ENCODE measurements at regions of chr10 and their contacts with region 1.

Region 1: DNA sequence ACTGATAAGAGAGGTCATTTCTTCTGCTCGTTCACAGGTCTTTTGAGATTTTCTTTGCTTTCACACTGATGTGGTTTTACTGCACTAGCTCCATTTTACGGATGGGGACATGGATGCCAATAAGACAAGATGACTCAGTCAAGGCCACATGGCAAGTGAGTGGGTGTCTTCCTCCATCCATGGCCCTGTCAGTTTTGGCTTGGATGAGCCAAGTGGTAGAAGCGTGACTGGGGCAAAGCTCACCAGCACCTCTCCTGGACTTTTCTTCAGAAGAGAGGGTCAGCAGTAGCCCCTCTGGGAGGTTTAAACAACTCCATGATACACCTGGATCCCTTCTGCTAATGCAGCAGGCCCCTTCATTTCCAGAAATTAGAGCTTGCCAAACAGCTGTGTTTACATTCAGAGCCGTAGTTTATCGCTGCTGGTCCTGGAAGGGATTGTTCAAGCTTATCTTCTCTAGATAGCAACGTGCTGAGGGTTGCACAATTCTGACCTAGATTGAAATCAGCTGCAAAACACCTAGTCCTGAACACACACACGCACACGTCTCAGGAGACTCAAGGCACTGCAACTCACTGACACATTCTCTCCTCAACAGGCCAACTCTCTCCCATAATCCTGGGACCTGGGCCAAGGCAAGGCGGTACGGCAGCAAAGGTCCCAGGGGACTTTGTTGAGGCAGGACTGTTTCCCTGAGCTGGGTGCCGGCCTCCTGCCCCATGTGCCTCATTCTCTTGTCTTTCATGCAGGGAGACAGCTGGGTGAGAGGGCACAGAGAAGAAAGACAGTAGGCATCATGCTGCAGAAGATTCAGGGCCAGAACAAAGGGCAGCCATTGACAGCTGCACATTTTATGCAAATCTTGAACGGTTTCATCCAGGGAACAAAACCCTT is 14.2 kb upstream of the PDCD4 start:
- DNase-seq: peak; percentile 88 to 90
- H3K4me3 ChIP-seq: no peak overlapping the region
- H3K4me3 Mint-ChIP-seq: peak overlapping the region; percentile 54
- H3K27ac Mint-ChIP-seq: peak overlapping the region; percentile 65
- H3K4me1 ChIP-seq: peaks cover 44% of the 10 kb centered on the region
- H3K4me1 Mint-ChIP-seq: peaks cover 24% of the 10 kb centered on the region
- H3K27me3 ChIP-seq: no peaks in the 10 kb centered on the region
- H3K27me3 Mint-ChIP-seq: no peaks in the 10 kb centered on the region
- CTCF ChIP-seq: no peak

Region 2: GRCh38 chr10:110387983-110388687 is 469.4 kb before region 1 on chr10:
- CTCF ChIA-PET with region 1: no interaction called
- POLR2A ChIA-PET with region 1: no interaction called
- intact Hi-C with region 1: no loop called
- DNase-seq: no peak
- H3K4me3 ChIP-seq: no peak overlapping the region
- H3K4me3 Mint-ChIP-seq: no peak overlapping the region
- H3K27ac Mint-ChIP-seq: peak overlapping the region; percentile 60
- H3K4me1 ChIP-seq: peaks cover 24% of the 10 kb centered on the region
- H3K4me1 Mint-ChIP-seq: peaks cover 32% of the 10 kb centered on the region
- H3K27me3 ChIP-seq: no peaks in the 10 kb centered on the region
- H3K27me3 Mint-ChIP-seq: no peaks in the 10 kb centered on the region
- CTCF ChIP-seq: no peak

Region 3: GRCh38 chr10:110657968-110658691 is 199.4 kb before region 1 on chr10:
- CTCF ChIA-PET with region 1: no interaction called
- POLR2A ChIA-PET with region 1: no interaction called
- intact Hi-C with region 1: no loop called
- DNase-seq: no peak
- H3K4me3 ChIP-seq: no peak overlapping the region
- H3K4me3 Mint-ChIP-seq: no peak overlapping the region
- H3K27ac Mint-ChIP-seq: no peak overlapping the region
- H3K4me1 ChIP-seq: no peaks in the 10 kb centered on the region
- H3K4me1 Mint-ChIP-seq: no peaks in the 10 kb centered on the region
- H3K27me3 ChIP-seq: no peaks in the 10 kb centered on the region
- H3K27me3 Mint-ChIP-seq: peaks cover 6% of the 10 kb centered on the region
- CTCF ChIP-seq: no peak

Region 4: DNA sequence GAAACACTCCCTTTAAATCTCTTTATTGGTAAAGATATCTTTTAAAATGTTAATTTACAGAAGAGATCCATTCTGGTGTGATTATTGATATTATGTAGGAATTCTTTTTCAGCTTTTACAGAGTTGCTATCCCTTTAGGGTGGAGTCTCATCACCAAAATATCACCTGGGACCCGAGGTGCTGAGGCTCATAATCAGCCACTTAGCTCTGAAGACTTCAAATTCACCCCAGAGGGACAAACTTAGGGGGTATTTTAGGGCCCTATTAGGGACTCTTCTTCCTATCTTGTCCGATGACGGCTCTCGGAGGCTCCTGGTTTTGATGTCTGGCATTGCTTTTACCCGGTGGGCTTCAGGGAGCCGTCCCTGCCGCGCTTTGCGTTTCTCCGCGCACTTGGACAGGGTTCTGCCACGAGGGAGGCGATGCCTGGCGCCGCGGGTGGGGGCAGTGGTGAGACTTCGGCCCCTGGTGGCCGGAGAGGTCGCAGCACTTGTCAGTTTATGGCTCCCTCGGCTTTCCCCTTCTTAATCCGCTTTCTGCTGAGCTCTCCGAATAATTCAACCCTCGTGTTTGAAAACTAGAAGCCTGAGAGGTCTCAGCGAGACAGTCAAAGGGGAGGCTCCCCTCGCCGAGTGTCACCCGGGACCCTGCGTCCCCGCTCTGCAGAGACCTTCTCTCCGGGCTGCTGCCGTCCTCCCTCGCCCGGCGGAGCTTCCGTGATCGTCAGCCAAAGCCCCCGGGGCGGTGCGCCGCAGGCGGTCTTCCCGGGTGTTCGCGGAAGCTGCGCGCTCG is 185.5 kb before region 1 on chr10:
- CTCF ChIA-PET with region 1: no interaction called
- POLR2A ChIA-PET with region 1: no interaction called
- intact Hi-C with region 1: no loop called
- DNase-seq: peak; percentile 64 to 75
- H3K4me3 ChIP-seq: peak overlapping the region; percentile 50
- H3K4me3 Mint-ChIP-seq: peak overlapping the region; percentile 71
- H3K27ac Mint-ChIP-seq: peak overlapping the region; percentile 60
- H3K4me1 ChIP-seq: no peaks in the 10 kb centered on the region
- H3K4me1 Mint-ChIP-seq: no peaks in the 10 kb centered on the region
- H3K27me3 ChIP-seq: no peaks in the 10 kb centered on the region
- H3K27me3 Mint-ChIP-seq: peaks cover 9% of the 10 kb centered on the region
- CTCF ChIP-seq: peak; percentile 69 to 81

Region 5: GRCh38 chr10:110794808-110795207 is 62.7 kb before region 1 on chr10:
- CTCF ChIA-PET with region 1: no interaction called
- POLR2A ChIA-PET with region 1: no interaction called
- intact Hi-C with region 1: loop called (anchors 1 kb)
- DNase-seq: no peak
- H3K4me3 ChIP-seq: no peak overlapping the region
- H3K4me3 Mint-ChIP-seq: no peak overlapping the region
- H3K27ac Mint-ChIP-seq: no peak overlapping the region
- H3K4me1 ChIP-seq: peaks cover 18% of the 10 kb centered on the region
- H3K4me1 Mint-ChIP-seq: peaks cover 10% of the 10 kb centered on the region
- H3K27me3 ChIP-seq: no peaks in the 10 kb centered on the region
- H3K27me3 Mint-ChIP-seq: no peaks in the 10 kb centered on the region
- CTCF ChIP-seq: no peak

Region 6: DNA sequence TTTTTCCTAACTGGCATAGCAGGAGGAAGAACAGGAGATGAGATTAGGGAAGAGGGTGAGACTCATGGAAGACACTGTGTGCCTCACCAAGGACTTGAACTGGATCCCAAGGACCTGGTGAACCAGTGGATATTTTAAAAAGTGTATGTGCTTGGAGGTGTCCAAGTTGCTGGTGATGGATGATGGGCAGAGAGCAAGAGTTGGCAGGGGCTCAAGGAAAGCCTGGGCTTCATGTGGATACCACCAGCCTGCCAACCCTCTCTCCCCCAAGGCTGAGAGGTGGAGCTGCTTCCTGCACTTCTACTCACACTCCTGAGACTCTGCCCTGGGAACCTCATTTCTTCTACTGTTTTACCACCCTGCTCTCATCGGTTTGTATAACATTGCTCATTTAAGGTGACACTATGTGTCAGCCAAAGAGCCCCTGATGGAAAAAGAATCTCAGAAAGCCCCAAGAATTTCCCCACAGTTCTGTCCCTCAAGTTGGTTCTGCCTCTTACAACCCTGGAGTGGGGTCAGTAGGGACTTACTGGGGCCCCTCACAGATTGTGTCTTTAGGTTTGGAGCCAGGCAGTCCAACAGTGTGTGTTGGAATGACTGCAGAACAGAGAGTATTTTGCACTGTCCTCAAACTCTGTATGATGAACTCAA is 42.0 kb before region 1 on chr10:
- CTCF ChIA-PET with region 1: no interaction called
- POLR2A ChIA-PET with region 1: no interaction called
- intact Hi-C with region 1: loop called (anchors 5 kb)
- DNase-seq: no peak
- H3K4me3 ChIP-seq: no peak overlapping the region
- H3K4me3 Mint-ChIP-seq: no peak overlapping the region
- H3K27ac Mint-ChIP-seq: no peak overlapping the region
- H3K4me1 ChIP-seq: 0 out of 2 replicates have a peak, but pooled peaks cover 3% of the 10 kb centered on the region
- H3K4me1 Mint-ChIP-seq: peaks cover 16% of the 10 kb centered on the region
- H3K27me3 ChIP-seq: no peaks in the 10 kb centered on the region
- H3K27me3 Mint-ChIP-seq: no peaks in the 10 kb centered on the region
- CTCF ChIP-seq: no peak

Region 7: GRCh38 chr10:110871298-110872084 is 14.0 kb after region 1 on chr10 and contains the start of gene PDCD4:
- CTCF ChIA-PET with region 1: interaction called, 9 read pairs
- POLR2A ChIA-PET with region 1: interaction called, 32 read pairs
- intact Hi-C with region 1: loop called (anchors 1 kb)
- DNase-seq: peak; percentile 99 to 100
- H3K4me3 ChIP-seq: peak within 1 kb of the TSS; percentile 72
- H3K4me3 Mint-ChIP-seq: peak within 1 kb of the TSS; percentile 85
- H3K27ac Mint-ChIP-seq: peak within 1 kb of the TSS; percentile 93
- H3K4me1 ChIP-seq: peaks cover 10% of the 10 kb centered on the region; the same call in 1 of the 2 replicates
- H3K4me1 Mint-ChIP-seq: peaks cover 12% of the 10 kb centered on the region
- H3K27me3 ChIP-seq: no peaks in the 10 kb centered on the region
- H3K27me3 Mint-ChIP-seq: no peaks in the 10 kb centered on the region
- CTCF ChIP-seq: no peak
- total RNA-seq, gene PDCD4: 65.5 and 66.1 TPM in 2 replicates

Region 8: DNA sequence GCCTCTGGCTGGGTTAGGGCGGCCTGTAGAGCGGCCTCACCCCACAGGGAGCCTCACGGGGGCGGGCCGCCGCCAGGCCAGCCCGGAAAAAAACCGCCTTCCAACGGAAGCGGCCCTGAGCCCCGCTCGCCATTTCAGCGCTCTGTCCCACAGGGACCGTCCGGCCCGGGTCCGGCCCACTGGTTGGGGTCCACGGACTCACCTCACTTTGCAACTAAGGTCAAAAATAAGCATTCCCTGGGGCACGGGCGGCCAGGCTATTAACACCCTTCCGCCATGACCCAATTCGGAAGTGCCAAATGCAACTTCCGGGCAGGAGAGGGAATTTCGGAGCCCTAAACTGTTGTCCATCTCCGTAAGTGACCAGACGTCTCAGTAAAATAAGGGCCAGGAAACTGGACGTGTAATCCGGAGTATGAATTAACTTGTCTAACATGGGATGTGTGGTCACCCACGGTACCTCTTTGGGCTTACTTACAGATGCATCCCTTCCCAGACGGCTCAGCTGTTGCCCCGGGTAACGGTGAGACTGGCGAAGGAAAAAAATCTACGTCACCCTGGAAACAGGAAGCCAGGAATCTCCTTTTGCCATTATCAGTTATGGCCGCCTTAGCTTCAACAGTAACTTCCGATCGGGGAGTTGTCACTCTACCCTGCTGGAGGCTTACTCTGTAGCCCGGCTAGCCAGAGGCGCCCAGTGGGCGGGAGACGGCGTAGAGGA is 61.3 kb after region 1 on chr10 and contains the start of gene BBIP1:
- CTCF ChIA-PET with region 1: interaction called, 4 read pairs
- POLR2A ChIA-PET with region 1: interaction called, 13 read pairs
- intact Hi-C with region 1: loop called (anchors 1 kb)
- DNase-seq: no peak
- H3K4me3 ChIP-seq: peak within 1 kb of the TSS; percentile 83
- H3K4me3 Mint-ChIP-seq: peak within 1 kb of the TSS; percentile 79
- H3K27ac Mint-ChIP-seq: peak within 1 kb of the TSS; percentile 100
- H3K4me1 ChIP-seq: peaks cover 12% of the 10 kb centered on the region; the same call in 1 of the 2 replicates
- H3K4me1 Mint-ChIP-seq: peaks cover 15% of the 10 kb centered on the region
- H3K27me3 ChIP-seq: no peaks in the 10 kb centered on the region
- H3K27me3 Mint-ChIP-seq: no peaks in the 10 kb centered on the region
- CTCF ChIP-seq: peak in 1 of 2 experiments; percentile 6
- total RNA-seq, gene BBIP1: 16.7 and 19.2 TPM in 2 replicates

Measured in Caco-2 (cell line).